Naive thymus-derived CD4-positive, alpha-beta T cell (primary cell): ENCODE measurements at regions of chr10 and their contacts with region 1.

Region 1: DNA sequence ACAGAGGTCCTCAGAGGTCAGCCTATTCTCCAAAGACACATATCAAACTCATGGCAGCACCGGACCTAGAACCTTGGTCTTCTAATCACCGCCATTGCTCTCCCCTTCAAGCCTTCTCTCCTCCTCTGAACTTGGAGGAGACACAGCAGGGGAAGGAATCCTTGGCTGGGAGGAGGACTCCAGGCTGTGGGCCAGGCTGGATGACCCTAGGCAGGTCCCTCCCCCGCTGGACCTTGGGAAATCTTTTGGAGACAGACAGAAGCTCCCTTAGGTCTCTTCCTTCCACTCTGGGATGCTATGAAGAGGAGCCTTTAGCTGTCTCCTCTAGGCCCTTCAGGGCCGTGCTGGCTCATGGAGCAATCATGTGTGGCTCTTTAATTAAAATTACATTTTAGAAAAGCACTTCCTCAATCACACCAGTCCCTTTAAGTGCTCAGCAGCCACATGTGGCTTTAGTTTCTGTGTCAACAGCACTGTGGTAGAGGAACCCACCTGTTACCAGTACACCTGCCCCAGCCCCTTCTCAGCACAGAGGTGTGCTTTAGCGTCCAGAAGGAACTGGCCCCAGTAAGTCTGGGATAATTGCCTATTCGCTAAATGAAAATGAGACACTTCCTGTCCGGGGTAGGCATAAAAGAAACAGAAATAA is 238.2 kb downstream of the CELF2 start:
- DNase-seq: no peak
- ATAC-seq: no peak
- H3K4me3 ChIP-seq: no peak overlapping the region
- H3K4me3 Mint-ChIP-seq: peak overlapping the region in 4 of 10 donors; percentile 4 to 63 (median 32)
- H3K27ac ChIP-seq: peak overlapping the region; percentile 60
- H3K27ac Mint-ChIP-seq: peak overlapping the region; percentile 46 to 96 (median 88)
- H3K4me1 ChIP-seq: peaks cover 0 to 6% of the 10 kb centered on the region in 2 donors
- H3K4me1 Mint-ChIP-seq: peaks cover 49 to 81% (median 76%) of the 10 kb centered on the region in 7 donors
- H3K27me3 ChIP-seq: no peaks in the 10 kb centered on the region
- H3K27me3 Mint-ChIP-seq: no peaks in the 10 kb centered on the region

Region 2: GRCh38 chr10:10385846-10386245 is 870.1 kb before region 1 on chr10:
- CTCF ChIA-PET with region 1: no interaction called
- POLR2A ChIA-PET with region 1: no interaction called
- intact Hi-C with region 1: no loop called
- DNase-seq: no peak
- ATAC-seq: no peak
- H3K4me3 ChIP-seq: no peak overlapping the region
- H3K4me3 Mint-ChIP-seq: no peak overlapping the region
- H3K27ac ChIP-seq: no peak overlapping the region
- H3K27ac Mint-ChIP-seq: no peak overlapping the region
- H3K4me1 ChIP-seq: no peaks in the 10 kb centered on the region
- H3K4me1 Mint-ChIP-seq: no peaks in the 10 kb centered on the region
- H3K27me3 ChIP-seq: no peaks in the 10 kb centered on the region
- H3K27me3 Mint-ChIP-seq: peaks cover 0 to 13% (median 7%) of the 10 kb centered on the region in 5 donors

Region 3: GRCh38 chr10:11017570-11018431 is 238.1 kb before region 1 on chr10 and contains the start of gene CELF2:
- CTCF ChIA-PET with region 1: no interaction called
- POLR2A ChIA-PET with region 1: no interaction called
- intact Hi-C with region 1: loop called in 1 of 2 experiments (anchors 5 kb)
- DNase-seq: peak; percentile 35 to 62 (median 42)
- ATAC-seq: peak; percentile 80
- H3K4me3 ChIP-seq: peak within 1 kb of the TSS; percentile 40
- H3K4me3 Mint-ChIP-seq: peak within 1 kb of the TSS; percentile 69 to 91 (median 80)
- H3K27ac ChIP-seq: no peak within 1 kb of the TSS
- H3K27ac Mint-ChIP-seq: peak within 1 kb of the TSS in 2 of 9 donors; percentile 32 to 70
- H3K4me1 ChIP-seq: peaks cover 4% of the 10 kb centered on the region in 2 donors
- H3K4me1 Mint-ChIP-seq: peaks cover 0 to 17% (median 11%) of the 10 kb centered on the region in 7 donors
- H3K27me3 ChIP-seq: peaks cover 5 to 21% of the 10 kb centered on the region in 2 donors
- H3K27me3 Mint-ChIP-seq: peaks cover 69 to 88% (median 74%) of the 10 kb centered on the region in 5 donors
- total RNA-seq, gene CELF2: 135 to 207 (median 178) TPM

Region 4: DNA sequence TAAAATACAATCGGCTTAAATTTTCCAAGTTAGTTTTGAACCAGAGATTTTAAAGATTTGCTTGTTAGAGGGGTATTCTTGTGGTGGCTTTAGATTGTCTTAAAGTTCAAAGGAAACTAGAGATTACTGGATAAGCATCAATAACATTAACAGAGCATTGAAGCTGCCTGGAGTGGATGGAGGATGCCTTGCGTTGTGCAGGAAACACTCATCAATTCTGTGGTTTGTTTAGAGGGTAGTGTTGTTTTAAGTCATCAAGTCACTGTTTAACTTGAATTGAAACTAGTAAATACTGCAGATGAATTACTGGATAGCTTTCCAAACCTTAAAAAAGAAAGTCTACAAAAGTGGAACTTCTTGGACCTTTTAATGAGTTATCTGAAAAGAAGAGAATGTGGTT is 19.7 kb before region 1 on chr10:
- CTCF ChIA-PET with region 1: no interaction called
- POLR2A ChIA-PET with region 1: no interaction called
- intact Hi-C with region 1: loop called in 1 of 2 experiments (anchors 2 kb)
- DNase-seq: peak in 6 of 9 donors; percentile 29 to 56 (median 48)
- ATAC-seq: peak; percentile 83
- H3K4me3 ChIP-seq: no peak overlapping the region
- H3K4me3 Mint-ChIP-seq: peak overlapping the region in 9 of 10 donors; percentile 44 to 68 (median 63)
- H3K27ac ChIP-seq: peak overlapping the region; percentile 44
- H3K27ac Mint-ChIP-seq: peak overlapping the region; percentile 26 to 92 (median 77)
- H3K4me1 ChIP-seq: peaks cover 61 to 82% of the 10 kb centered on the region in 2 donors
- H3K4me1 Mint-ChIP-seq: peaks cover 69 to 94% (median 92%) of the 10 kb centered on the region in 7 donors
- H3K27me3 ChIP-seq: no peaks in the 10 kb centered on the region
- H3K27me3 Mint-ChIP-seq: no peaks in the 10 kb centered on the region

Region 5: DNA sequence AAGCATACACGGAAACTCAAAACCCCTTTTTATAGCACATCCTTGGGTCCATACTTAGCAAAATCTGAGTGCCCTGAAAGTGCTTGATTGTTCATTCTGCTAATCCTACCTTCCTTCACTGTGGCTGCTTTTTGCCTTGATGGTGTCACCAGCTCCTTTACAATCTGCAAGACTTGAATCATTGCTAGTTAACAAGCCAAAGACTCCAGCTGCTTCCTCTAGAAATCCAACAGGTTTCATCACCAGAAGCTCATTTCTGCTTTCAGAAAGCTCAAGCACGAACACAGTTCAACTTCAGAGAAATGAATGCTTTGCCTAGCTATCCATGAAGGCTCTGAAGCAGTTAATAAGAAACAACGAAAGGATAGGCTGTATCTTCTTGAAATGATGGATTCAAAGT is 317.6 kb after region 1 on chr10:
- CTCF ChIA-PET with region 1: no interaction called
- POLR2A ChIA-PET with region 1: no interaction called
- intact Hi-C with region 1: no loop called
- DNase-seq: no peak
- ATAC-seq: peak; percentile 61
- H3K4me3 ChIP-seq: no peak overlapping the region
- H3K4me3 Mint-ChIP-seq: no peak overlapping the region
- H3K27ac ChIP-seq: no peak overlapping the region
- H3K27ac Mint-ChIP-seq: no peak overlapping the region
- H3K4me1 ChIP-seq: no peaks in the 10 kb centered on the region
- H3K4me1 Mint-ChIP-seq: peaks cover 0 to 54% (median 16%) of the 10 kb centered on the region in 7 donors
- H3K27me3 ChIP-seq: no peaks in the 10 kb centered on the region
- H3K27me3 Mint-ChIP-seq: peaks cover 0 to 24% (median 0%) of the 10 kb centered on the region in 5 donors